ENCODE measurements at regions of chr6 and their contacts with region 1.

Region 1: DNA sequence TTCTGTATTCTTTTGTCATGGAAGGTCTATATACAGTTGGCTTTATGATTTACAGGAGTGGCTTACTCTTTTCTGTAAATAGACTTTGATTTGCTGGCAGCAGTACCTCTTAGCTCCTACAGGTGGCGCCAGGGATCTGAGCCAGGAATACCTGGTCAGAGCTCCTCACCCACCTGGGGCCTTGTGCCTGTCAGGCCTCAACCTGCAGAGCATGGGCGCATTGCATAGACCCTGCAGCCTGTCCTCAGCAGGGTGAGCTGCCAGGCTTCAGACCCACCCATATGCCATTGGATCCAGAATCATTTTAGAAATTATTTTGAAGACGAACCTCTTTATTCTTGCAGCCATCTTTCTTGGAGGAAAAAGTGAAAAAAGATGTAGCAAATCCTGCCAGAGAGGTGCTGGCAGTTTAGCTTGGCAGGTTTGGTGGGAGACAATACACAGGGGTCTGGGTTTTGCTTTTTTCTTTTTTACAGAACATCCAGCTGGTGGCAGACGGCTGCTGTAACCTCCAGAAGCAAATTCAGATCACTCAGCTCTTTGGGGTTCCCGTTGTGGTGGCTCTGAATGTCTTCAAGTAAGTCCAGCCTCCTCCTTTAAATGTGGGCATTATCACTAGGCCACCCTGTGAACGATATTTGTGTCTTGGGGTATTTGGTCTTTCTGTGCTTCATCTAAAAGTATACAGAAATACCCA is 149.1 kb downstream of the MTHFD1L start:
- DNase-seq: peak; percentile 40 to 89 (median 72)

Region 2: DNA sequence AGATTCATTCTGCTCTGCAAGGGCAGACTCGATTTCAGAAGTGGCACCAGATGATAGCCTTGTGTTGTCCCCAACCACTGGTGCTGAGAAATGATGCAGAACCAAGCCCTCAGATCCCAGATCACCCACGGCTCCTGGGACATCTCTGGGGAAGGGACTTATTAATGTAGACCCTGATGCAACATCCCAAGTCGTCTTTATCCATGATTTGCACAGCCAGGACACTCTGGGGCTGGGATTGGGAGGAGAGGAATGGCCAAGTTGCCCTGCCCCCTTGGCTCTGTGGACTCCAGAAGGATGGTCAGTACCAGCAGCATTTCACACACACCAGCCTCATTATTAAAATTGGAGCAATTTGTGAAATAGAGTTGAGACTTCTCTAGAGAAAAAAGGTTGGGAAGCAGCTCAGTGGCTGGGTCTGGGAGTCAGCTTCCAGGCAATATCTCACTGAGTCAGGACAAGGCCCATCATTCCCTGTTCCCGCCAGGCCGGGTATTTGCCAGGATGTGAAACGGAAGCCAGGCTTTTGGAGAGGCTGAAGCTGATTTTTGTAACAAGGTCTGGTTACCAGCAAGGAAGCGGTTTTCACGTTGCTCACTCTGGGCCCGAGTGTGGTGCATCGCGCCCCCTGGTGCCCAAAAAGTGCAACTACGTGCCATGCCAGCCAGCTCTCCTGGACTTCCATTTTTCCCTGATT is 309.4 kb after region 1 on chr6:
- intact Hi-C with region 1: loop called (anchors 5 kb)
- DNase-seq: peak; percentile 52 to 92 (median 83)

Measured in head of caudate nucleus (tissue), 42 donors.